Pancreas (tissue), 10 donors: ENCODE measurements at regions of chr5 and their contacts with region 1.

Region 1: DNA sequence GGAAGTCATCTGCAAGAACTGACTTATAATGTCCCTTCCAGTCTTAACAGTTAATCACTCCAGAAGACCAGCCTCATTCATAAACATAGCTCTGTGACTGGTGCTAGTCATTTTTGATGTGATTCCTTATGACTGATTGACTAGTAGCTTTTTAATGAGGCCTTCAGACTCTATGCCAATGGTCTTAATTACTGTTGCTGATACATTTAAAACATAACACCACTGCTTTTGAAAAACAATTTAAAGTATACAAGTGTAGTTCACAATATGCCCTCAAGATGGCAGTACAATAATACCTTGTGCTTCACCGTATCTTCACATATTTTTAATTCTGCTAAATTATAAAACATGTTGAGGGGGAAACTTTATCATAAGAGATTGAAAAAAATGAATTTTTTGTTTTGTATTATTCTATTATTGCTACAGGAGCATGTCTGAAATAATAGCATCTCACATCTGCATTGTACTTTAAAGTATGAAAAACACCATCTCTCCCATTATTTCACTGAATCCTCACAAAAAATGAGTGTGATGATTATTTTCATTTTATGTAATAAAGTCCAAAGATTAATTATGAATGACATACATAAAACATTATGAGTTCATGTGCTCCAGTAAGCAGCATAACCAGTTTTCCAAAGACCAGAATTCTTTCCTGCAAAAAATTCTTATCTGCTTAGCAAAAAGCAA is 55.2 kb upstream of the SHISAL2B start:
- DNase-seq: no peak
- ATAC-seq: peak in 3 of 4 donors; percentile 60 to 80 (median 64)
- H3K4me3 ChIP-seq: no peak overlapping the region
- H3K27ac ChIP-seq: no peak overlapping the region
- H3K4me1 ChIP-seq: no peaks in the 10 kb centered on the region
- H3K27me3 ChIP-seq: no peaks in the 10 kb centered on the region
- CTCF ChIP-seq: peak; percentile 28 to 76 (median 67)

Region 2: DNA sequence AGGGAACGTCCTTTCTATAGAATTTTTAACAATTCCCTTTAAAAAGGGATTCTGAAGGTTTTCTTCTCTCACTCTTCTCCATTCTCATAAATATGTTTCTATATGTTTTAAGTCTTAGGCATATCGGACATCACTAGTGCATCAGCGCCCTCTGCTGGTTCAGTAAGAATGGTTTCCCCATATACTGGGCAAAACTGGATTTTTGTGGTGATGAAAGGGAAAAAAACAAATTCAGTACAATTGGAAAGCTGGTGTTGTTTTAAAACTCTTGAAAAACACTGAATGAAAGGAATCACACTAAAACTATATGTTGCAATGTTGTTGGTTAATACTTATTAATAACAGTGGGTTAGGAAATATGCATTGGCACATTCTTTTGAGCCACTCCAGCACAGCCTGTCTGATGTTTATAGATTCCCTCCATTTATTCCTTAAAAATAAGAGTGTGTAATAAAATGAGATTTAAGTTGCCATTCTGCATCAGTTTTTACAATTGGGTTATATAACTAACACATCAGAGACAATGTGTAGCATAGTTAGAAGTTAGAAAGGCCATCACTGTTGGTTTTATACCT is 149.4 kb after region 1 on chr5:
- intact Hi-C with region 1: loop called in 2 of 3 experiments (anchors 5 kb)
- DNase-seq: peak in 5 of 6 donors; percentile 43 to 69 (median 55)
- ATAC-seq: peak; percentile 50 to 91 (median 85)
- H3K4me3 ChIP-seq: no peak overlapping the region
- H3K27ac ChIP-seq: no peak overlapping the region
- H3K4me1 ChIP-seq: no peaks in the 10 kb centered on the region
- H3K27me3 ChIP-seq: no peaks in the 10 kb centered on the region
- CTCF ChIP-seq: peak; percentile 48 to 84 (median 64)